ENCODE measurements at regions of chr5 and their contacts with region 1.

Region 1: GRCh38 chr5:39411051-39411450 is 13.7 kb downstream of the DAB2 start:
- DNase-seq: no peak
- H3K4me3 ChIP-seq: no peak overlapping the region
- H3K27ac ChIP-seq: peak overlapping the region; percentile 58
- H3K27me3 ChIP-seq: no peaks in the 10 kb centered on the region
- CTCF ChIP-seq: no peak

Region 2: DNA sequence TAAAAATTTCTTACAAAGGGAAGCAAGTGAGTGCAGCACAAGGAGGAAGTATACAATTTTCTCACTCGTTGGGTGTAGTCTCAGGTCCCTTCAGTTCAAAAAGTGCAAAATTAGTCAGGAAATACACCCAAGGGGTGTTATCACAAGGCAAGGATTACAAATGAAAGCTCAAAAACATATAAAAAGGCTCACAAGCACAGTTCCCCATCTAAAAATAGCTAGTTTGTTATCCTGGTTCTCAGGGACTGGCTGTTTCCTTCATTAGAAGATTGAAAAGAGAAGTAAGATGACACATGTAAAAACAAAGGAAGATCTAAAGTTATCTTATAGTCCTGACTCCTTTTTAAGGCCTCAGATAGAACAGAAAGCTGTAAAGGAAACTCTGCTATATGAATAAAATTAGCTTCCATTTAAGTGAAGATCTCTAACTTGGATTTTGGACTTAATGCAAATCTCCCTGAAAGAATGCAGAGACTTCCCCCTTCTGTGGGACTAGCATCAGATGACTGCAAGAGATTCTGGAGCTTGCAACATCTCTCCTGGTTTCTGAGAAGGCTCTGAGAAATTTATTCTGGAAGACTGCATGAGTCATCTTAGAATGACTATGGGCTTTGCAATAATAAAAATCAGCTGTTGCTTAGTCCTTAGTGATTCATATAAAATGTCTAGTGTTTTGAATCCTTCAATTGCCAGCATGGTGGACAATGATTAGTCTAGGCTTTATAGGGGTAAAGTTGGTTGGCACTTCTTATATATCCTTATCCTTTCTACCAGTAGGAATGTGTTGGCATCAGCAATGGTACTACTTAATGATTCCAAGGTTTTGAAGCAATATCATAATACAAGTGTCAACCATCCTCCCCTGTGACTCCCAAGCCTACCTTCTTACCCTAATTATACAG is 11.7 kb before region 1 on chr5:
- CTCF ChIA-PET with region 1: interaction called, 3 read pairs
- POLR2A ChIA-PET with region 1: interaction called, 10 read pairs
- DNase-seq: peak; percentile 93
- H3K4me3 ChIP-seq: no peak overlapping the region
- H3K27ac ChIP-seq: peak overlapping the region; percentile 92
- H3K27me3 ChIP-seq: no peaks in the 10 kb centered on the region
- CTCF ChIP-seq: no peak

Measured in AG04450 (cell line).